ENCODE measurements at regions of chr6 and their contacts with region 1.

Region 1: GRCh38 chr6:154593122-154593521 is 82.6 kb upstream of the CNKSR3 start:
- DNase-seq: no peak
- ATAC-seq: peak; percentile 89

Region 2: GRCh38 chr6:154410619-154411072 is 182.5 kb before region 1 on chr6:
- intact Hi-C with region 1: loop called (anchors 2 kb)
- DNase-seq: no peak
- ATAC-seq: peak; percentile 87

Region 3: GRCh38 chr6:154937306-154938220 is 344.4 kb after region 1 on chr6:
- intact Hi-C with region 1: no loop called
- DNase-seq: no peak
- ATAC-seq: no peak

Region 4: DNA sequence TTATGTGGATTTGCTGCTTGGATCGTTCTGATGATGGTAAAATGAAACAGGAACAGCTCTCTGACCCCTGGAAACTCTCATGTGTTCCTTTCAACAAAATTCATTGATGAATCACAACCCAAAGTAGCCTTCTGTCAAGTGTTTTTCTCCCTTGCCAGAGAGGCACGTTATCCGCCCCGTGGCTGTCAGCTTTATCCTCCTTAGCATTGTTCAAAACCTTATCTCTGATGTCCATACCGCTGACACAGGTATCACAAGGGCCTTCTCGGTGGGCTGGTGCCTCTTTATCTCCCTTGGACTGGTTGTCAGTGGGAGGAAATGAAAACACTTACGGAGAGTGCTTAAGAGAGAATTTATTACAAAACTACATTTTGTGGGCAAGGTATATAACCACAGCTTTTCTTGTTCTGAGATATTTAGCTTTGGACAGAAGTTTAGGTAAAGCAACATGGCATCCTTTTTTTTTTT is 486.9 kb after region 1 on chr6:
- intact Hi-C with region 1: no loop called
- DNase-seq: no peak
- ATAC-seq: no peak